ENCODE measurements at regions of chr2 and their contacts with region 1.

Region 1: DNA sequence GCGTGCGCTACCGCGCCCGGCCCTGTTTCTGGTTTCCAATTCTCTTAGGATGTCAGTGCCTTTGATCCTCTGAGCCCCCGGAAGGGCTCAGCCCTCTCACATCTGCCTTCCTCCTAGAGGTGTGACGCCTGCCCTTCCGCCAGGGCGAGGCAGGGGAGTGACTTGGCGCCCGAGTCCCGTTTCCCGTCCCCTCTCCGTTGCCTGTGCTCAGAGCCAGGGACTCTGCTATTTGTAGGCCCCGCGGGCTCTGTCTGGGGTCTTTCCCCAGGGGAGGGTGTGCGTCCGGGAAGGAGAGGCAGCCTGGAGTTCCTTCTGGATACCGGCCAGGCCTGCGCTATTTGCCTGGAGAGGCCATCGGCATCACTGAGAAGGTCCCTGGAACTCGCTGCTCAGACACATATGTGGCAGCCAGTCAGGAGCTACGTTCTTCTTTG is 103.7 kb upstream of the TAF1B start:
- DNase-seq: peak; percentile 79 to 90
- ATAC-seq: peak; percentile 59 to 79 (median 73)
- H3K4me3 ChIP-seq: peak overlapping the region; percentile 55
- H3K27ac ChIP-seq: peak overlapping the region; percentile 92
- H3K4me1 ChIP-seq: peaks cover 29% of the 10 kb centered on the region
- H3K27me3 ChIP-seq: no peaks in the 10 kb centered on the region
- CTCF ChIP-seq: no peak

Region 2: GRCh38 chr2:9693211-9693520 is 46.4 kb before region 1 on chr2:
- intact Hi-C with region 1: loop called in 1 of 2 experiments (anchors 1 kb)
- DNase-seq: peak; percentile 83 to 92
- ATAC-seq: peak; percentile 94 to 98 (median 96)
- H3K4me3 ChIP-seq: peak overlapping the region; percentile 54
- H3K27ac ChIP-seq: peak overlapping the region; percentile 96
- H3K4me1 ChIP-seq: peaks cover 19% of the 10 kb centered on the region
- H3K27me3 ChIP-seq: no peaks in the 10 kb centered on the region
- CTCF ChIP-seq: no peak

Region 3: GRCh38 chr2:9752441-9753275 is 13.1 kb after region 1 on chr2:
- intact Hi-C with region 1: loop called in 1 of 2 experiments (anchors 1 kb)
- DNase-seq: no peak
- ATAC-seq: no peak
- H3K4me3 ChIP-seq: no peak overlapping the region
- H3K27ac ChIP-seq: no peak overlapping the region
- H3K4me1 ChIP-seq: peaks cover 30% of the 10 kb centered on the region
- H3K27me3 ChIP-seq: no peaks in the 10 kb centered on the region
- CTCF ChIP-seq: no peak

Region 4: GRCh38 chr2:9799665-9800632 is 60.4 kb after region 1 on chr2:
- intact Hi-C with region 1: no loop called
- DNase-seq: peak; percentile 87 to 93
- ATAC-seq: peak; percentile 73 to 90 (median 79)
- H3K4me3 ChIP-seq: peak overlapping the region; percentile 4
- H3K27ac ChIP-seq: no peak overlapping the region
- H3K4me1 ChIP-seq: peaks cover 12% of the 10 kb centered on the region
- H3K27me3 ChIP-seq: no peaks in the 10 kb centered on the region
- CTCF ChIP-seq: peak; percentile 95

Region 5: GRCh38 chr2:10103179-10103732 is 363.7 kb after region 1 on chr2:
- intact Hi-C with region 1: no loop called
- DNase-seq: no peak
- ATAC-seq: no peak
- H3K4me3 ChIP-seq: no peak overlapping the region
- H3K27ac ChIP-seq: no peak overlapping the region
- H3K4me1 ChIP-seq: no peaks in the 10 kb centered on the region
- H3K27me3 ChIP-seq: no peaks in the 10 kb centered on the region
- CTCF ChIP-seq: no peak